Naive thymus-derived CD8-positive, alpha-beta T cell (primary cell): ENCODE measurements at regions of chr9 and their contacts with region 1.

Region 1: GRCh38 chr9:136539427-136540421 is 6.1 kb downstream of the NOTCH1 start:
- DNase-seq: peak; percentile 60 to 93 (median 75)
- ATAC-seq: peak; percentile 66 to 72
- H3K4me3 Mint-ChIP-seq: peak overlapping the region; percentile 80 to 99 (median 92)
- H3K27ac Mint-ChIP-seq: peak overlapping the region; percentile 89 to 99 (median 97)
- H3K4me1 Mint-ChIP-seq: peaks cover 14 to 76% (median 59%) of the 10 kb centered on the region in 4 donors
- H3K27me3 Mint-ChIP-seq: no peaks in the 10 kb centered on the region

Region 2: DNA sequence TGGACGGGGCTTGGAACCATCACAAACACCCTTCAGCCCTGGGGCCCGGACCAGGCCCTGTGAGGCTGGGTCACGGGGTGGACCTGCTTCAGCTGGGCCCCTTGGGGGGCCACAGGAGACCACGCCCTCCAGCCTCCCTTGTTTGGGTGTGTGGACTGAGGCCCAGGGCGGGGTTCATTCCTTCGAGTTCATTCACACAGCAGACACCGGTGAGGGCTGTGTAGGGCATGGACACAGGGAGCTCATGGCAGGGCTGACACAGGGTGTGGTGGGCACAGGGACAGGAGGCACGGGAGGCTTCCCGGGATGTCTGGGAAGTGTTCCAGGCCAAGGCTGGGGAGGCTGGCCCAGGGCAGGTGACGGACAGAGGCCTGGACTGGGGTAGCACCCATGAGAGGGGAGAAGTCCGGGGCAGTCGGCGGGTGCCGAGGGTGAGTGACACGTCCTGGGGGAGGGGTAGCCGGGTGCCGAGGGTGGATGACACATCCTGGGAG is 185.1 kb before region 1 on chr9:
- POLR2A ChIA-PET with region 1: no interaction called
- DNase-seq: no peak
- ATAC-seq: no peak
- H3K4me3 Mint-ChIP-seq: no peak overlapping the region
- H3K27ac Mint-ChIP-seq: no peak overlapping the region
- H3K4me1 Mint-ChIP-seq: no peaks in the 10 kb centered on the region
- H3K27me3 Mint-ChIP-seq: no peaks in the 10 kb centered on the region

Region 3: GRCh38 chr9:136482793-136483588 is 56.7 kb before region 1 on chr9 and contains the start of gene SEC16A:
- POLR2A ChIA-PET with region 1: interaction called, 23 read pairs
- DNase-seq: peak; percentile 93 to 100 (median 99)
- ATAC-seq: peak; percentile 66 to 69
- H3K4me3 Mint-ChIP-seq: peak within 1 kb of the TSS; percentile 93 to 100 (median 98)
- H3K27ac Mint-ChIP-seq: peak within 1 kb of the TSS; percentile 90 to 100 (median 98)
- H3K4me1 Mint-ChIP-seq: peaks cover 18 to 44% (median 43%) of the 10 kb centered on the region in 4 donors
- H3K27me3 Mint-ChIP-seq: no peaks in the 10 kb centered on the region
- polyA plus RNA-seq, gene SEC16A: 14.2 to 35.8 (median 26.2) TPM

Region 4: GRCh38 chr9:136527721-136528691 is 11.7 kb before region 1 on chr9:
- POLR2A ChIA-PET with region 1: interaction called, 29 read pairs
- DNase-seq: peak in 1 of 10 donors; percentile 25
- ATAC-seq: no peak
- H3K4me3 Mint-ChIP-seq: peak overlapping the region in 3 of 10 donors; percentile 19 to 62 (median 23)
- H3K27ac Mint-ChIP-seq: peak overlapping the region in 7 of 10 donors; percentile 11 to 92 (median 66)
- H3K4me1 Mint-ChIP-seq: peaks cover 12 to 44% (median 32%) of the 10 kb centered on the region in 4 donors
- H3K27me3 Mint-ChIP-seq: no peaks in the 10 kb centered on the region

Region 5: GRCh38 chr9:136571531-136571930 is 31.8 kb after region 1 on chr9:
- POLR2A ChIA-PET with region 1: no interaction called
- DNase-seq: no peak
- ATAC-seq: no peak
- H3K4me3 Mint-ChIP-seq: no peak overlapping the region
- H3K27ac Mint-ChIP-seq: no peak overlapping the region
- H3K4me1 Mint-ChIP-seq: peaks cover 0 to 15% (median 6%) of the 10 kb centered on the region in 4 donors
- H3K27me3 Mint-ChIP-seq: no peaks in the 10 kb centered on the region

Region 6: GRCh38 chr9:136587145-136587943 is 47.6 kb after region 1 on chr9:
- POLR2A ChIA-PET with region 1: interaction called, 12 read pairs
- DNase-seq: no peak
- ATAC-seq: peak in 1 of 2 donors; percentile 7
- H3K4me3 Mint-ChIP-seq: no peak overlapping the region
- H3K27ac Mint-ChIP-seq: no peak overlapping the region
- H3K4me1 Mint-ChIP-seq: peaks cover 16 to 23% (median 21%) of the 10 kb centered on the region in 4 donors
- H3K27me3 Mint-ChIP-seq: no peaks in the 10 kb centered on the region

Region 7: DNA sequence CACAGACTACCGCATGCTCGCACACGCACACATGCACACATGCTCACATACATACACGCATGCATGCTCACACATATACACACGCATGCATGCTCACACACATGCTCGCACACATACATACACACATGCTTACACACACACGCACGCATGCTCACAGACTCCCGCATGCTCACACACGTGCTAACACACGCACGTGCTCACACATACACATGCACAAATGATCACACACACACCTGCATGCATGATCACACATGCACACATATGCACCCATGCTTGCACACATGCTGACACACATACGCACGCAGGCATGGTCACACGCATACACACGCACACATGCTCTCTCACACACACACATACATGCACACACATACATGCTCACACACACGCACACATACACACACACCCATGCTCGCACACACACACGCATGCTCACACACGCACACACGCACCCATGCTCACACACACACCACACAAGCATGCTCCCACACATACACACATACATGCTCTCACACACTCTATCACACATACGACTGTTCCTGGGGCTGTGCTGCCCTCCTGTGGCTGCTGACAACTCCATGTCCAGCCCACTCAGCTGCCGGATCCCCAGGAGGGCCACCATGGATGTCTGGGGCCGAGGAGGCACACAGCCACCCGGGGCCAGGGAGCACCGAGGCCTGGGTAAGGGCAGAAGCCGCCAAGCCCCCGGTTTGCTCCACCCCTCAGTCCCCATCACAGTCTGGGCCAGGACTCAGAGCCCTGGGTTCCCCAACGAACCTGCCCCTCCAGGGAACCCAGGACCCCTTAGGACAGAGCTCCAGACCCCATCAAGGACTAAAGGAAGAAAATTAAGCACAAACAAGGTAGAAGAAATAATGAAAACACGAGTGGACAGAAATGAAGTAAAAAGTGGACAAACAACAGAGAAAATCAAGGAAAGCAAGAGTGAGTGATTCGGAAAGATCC is 91.6 kb after region 1 on chr9:
- POLR2A ChIA-PET with region 1: interaction called, 17 read pairs
- DNase-seq: peak; percentile 68 to 91 (median 76)
- ATAC-seq: peak; percentile 97 to 98
- H3K4me3 Mint-ChIP-seq: no peak overlapping the region
- H3K27ac Mint-ChIP-seq: no peak overlapping the region
- H3K4me1 Mint-ChIP-seq: peaks cover 2 to 9% (median 3%) of the 10 kb centered on the region in 4 donors
- H3K27me3 Mint-ChIP-seq: peaks cover 0 to 7% (median 0%) of the 10 kb centered on the region in 5 donors

Region 8: DNA sequence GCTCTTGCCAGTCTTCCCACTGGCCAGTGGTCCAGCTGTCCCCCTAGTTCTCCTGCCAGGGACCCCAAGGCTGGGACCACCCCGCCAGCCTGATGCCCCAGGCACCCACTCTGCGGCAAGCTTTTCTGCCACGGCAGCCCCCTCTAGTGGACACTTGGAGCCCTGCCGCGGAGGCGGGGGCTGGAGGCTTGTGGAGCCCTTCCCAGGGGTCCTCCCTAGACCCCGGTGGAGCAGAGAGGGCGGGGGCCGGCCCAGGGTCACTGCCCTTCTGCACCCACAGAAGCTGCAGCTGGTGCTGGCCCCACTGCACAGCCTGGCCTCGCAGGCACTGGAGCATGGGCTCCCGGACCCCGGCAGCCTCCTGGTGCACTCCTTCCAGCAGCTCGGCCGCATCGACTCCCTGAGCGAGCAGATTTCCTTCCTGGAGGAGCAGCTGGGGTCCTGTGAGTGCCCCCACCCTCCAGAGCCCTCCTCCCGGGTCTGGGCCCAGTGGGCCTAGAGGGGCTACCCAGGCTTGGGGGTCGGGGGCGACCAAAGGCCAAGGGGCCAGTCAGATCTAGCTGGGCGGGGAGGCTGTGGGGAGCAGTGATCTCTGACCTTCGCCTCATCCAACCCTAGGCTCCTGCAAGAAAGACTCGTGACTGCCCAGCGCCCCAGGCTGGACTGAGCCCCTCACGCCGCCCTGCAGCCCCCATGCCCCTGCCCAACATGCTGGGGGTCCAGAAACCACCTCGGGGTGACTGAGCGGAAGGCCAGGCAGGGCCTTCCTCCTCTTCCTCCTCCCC is 132.1 kb after region 1 on chr9:
- POLR2A ChIA-PET with region 1: no interaction called
- DNase-seq: peak in 8 of 10 donors; percentile 19 to 48 (median 34)
- ATAC-seq: peak; percentile 54 to 72
- H3K4me3 Mint-ChIP-seq: no peak overlapping the region
- H3K27ac Mint-ChIP-seq: no peak overlapping the region
- H3K4me1 Mint-ChIP-seq: peaks cover 1 to 7% (median 2%) of the 10 kb centered on the region in 4 donors
- H3K27me3 Mint-ChIP-seq: peaks cover 0 to 4% (median 0%) of the 10 kb centered on the region in 5 donors